ENCODE measurements at regions of chr10 and their contacts with region 1.

Region 1: DNA sequence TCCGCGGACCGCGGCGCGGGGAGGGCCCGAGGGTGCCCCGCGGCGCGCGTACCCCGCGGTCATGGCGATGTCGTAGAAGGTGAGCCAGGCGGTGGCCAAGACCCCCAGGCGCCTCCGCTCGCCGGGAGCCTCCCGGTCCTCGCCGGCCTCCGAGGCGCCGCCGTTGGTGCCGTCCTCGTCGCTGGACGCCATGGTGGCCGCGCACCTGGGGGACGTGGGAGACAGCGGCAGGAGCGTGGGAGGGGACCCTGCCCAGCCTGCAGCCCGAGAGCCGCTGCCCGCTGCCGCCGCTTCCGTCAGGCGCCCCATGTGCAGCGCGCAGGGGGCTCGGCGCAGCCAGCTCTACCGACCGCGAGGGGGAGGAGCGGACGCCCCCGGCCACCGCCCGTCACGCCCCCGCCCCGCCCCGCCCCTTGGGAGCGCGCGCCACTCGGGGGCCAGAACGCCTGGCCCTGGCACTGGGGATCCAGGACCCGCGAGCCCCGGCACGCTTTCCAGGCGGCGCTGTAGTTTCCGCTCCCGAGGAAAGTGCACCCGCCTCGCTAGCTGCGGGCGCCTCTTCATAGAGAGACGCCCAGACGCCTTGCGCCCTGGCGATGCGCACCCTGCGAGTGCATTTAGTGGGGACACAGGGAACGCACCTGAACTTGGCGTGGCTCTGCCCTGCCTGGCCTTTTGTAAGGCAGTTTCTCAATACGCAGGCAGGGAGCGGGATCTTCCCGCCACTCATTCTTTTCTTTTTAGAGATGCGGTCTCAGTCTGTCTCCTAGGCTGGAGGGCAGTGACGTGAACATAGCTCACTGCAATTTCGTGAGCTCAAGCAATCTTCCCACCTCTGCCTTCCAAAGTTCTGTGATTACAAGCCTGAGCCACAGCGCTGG is at the start of gene HACD1:
- DNase-seq: peak; percentile 79
- CTCF ChIP-seq: no peak

Region 2: DNA sequence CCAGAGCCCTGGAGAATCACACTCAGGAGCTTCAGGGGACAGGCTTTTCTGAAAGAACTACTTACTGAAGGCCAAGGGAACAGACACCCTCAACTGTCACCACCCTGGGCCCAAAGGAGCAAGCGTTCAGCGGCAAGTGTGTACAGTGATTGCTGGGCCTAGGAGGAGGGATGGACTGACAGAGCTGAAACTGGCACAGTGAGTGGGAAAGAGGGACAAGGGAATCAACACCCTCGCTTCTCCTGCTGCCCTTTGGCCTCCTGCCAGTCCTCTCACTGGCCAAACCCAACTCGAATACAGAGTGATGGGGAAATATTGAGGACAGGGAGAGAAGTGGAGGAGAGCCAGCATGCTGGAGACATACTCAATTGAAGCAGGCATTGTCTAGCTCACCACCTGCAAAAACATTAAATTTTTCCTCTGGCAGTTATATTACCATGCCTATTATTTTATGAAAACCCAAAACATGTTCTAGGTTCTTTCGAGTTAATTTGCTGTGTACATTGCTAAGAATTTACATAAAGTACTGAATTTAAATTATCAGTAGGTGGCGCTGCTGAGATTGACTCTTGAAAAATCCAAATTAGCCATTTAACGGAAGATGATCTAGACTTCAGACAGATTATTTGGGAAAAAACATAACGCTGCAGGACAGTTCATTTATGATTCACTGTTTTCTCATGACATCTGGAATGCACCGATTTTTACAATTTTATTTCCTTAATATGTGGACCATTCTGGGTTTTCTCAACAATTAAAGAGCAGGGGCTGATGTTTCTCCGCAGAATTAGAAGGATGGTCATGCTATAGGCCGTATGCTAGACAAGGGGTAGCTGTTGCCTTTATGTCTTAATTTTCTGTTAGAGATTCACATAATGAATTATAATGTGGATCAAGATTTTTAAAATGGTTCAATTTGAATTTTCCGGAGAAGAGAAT is 120.0 kb after region 1 on chr10:
- in situ Hi-C with region 1: loop called (anchors 10 kb)
- DNase-seq: peak; percentile 48
- CTCF ChIP-seq: peak; percentile 63

Region 3: DNA sequence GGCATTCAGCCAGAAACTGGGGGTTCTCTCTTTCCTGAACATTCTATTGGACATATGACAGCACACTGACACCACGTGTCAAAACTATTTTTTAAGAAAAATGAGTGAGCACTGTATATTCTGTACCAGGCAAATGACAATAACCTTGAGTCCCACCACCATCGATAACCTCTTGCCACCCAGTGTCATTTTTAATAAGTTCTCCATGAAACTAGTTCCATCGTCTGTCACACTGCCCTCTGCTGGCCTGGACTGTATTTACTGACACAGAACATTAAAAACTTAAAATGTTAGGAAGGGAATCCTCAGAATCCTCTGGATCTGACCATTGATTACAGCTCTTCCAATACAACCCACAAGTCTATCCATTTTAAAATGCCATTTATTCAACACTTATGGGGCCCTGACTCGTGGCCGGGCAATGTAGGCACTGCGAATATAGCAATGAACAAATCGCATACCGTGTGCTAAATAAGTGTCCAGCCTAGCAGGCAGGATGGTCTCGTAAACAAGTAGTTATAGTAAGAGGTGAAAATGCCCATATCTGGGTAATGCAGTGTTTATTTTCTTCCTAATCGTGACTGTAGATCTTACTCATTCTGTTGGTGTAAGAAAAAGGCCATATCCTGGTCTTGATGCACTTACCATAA is 487.1 kb after region 1 on chr10:
- in situ Hi-C with region 1: loop called (anchors 25 kb)
- DNase-seq: peak; percentile 34
- CTCF ChIP-seq: peak; percentile 80

Region 4: DNA sequence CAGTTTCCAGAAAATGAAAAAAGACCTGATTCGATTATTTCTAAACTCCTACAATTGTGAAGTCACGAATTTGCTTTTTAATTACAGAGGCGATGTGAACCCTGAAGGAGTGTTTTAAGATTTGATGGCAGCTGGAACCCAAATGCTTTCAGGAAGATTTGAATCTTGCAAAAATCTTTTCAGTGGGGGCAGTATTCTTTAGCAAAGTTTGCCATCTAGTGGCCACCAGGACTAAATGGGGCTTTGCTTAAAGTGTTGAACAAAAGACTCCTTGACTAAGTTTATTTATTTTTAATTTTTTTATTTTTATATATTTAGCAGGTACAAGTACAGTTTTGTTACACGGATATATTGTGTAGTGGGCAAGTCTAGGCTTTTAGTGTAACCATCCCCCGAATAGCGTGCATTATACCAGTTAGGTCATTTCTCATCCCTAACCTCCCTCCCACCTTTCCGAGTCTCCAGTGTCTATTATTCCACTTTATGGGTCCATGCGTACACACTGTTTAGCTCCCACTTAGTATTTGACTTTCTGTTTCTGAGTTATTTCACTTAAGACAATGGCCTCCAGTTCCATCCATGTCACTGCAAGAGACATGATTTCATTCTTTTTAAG is 621.7 kb after region 1 on chr10:
- in situ Hi-C with region 1: loop called (anchors 25 kb)
- DNase-seq: peak; percentile 48
- CTCF ChIP-seq: peak; percentile 58